Ovary (tissue), 10 donors: ENCODE measurements at regions of chr2 and their contacts with region 1.

Region 1: GRCh38 chr2:130181325-130181879 is at the start of gene SMPD4:
- DNase-seq: peak; percentile 98 to 99 (median 98)
- H3K4me3 ChIP-seq: peak within 1 kb of the TSS; percentile 96
- H3K27ac ChIP-seq: peak within 1 kb of the TSS; percentile 87 to 91
- H3K4me1 ChIP-seq: peaks cover 7% of the 10 kb centered on the region
- H3K27me3 ChIP-seq: no peaks in the 10 kb centered on the region
- CTCF ChIP-seq: no peak
- EP300 ChIP-seq: no peak
- POLR2A ChIP-seq: peak; percentile 26
- total RNA-seq, gene SMPD4: 24.7 to 53.2 (median 39.5) TPM

Region 2: GRCh38 chr2:130342533-130343275 is 161.3 kb after region 1 on chr2 and contains the start of gene IMP4:
- intact Hi-C with region 1: loop called in 3 of 4 experiments (anchors 5 to 10 kb)
- DNase-seq: peak; percentile 94 to 98 (median 94)
- H3K4me3 ChIP-seq: peak within 1 kb of the TSS; percentile 79
- H3K27ac ChIP-seq: peak within 1 kb of the TSS; percentile 45 to 85
- H3K4me1 ChIP-seq: peaks cover 3% of the 10 kb centered on the region
- H3K27me3 ChIP-seq: no peaks in the 10 kb centered on the region
- CTCF ChIP-seq: peak in 1 of 3 donors; percentile 30
- EP300 ChIP-seq: no peak
- POLR2A ChIP-seq: peak; percentile 15
- total RNA-seq, gene IMP4: 40.8 to 74.0 (median 54.4) TPM